Heart right ventricle (tissue), 16 donors: ENCODE measurements at regions of chr10 and their contacts with region 1.

Region 1: GRCh38 chr10:71486484-71487114 is 89.9 kb downstream of the CDH23 start:
- DNase-seq: peak in 1 of 2 donors; percentile 54
- ATAC-seq: peak in 7 of 8 donors; percentile 42 to 68 (median 55)
- H3K4me3 ChIP-seq: no peak overlapping the region
- H3K27ac ChIP-seq: no peak overlapping the region
- H3K4me1 ChIP-seq: peaks cover 0 to 9% (median 7%) of the 10 kb centered on the region in 9 donors
- H3K27me3 ChIP-seq: no peaks in the 10 kb centered on the region
- CTCF ChIP-seq: peak; percentile 21 to 67 (median 55)

Region 2: DNA sequence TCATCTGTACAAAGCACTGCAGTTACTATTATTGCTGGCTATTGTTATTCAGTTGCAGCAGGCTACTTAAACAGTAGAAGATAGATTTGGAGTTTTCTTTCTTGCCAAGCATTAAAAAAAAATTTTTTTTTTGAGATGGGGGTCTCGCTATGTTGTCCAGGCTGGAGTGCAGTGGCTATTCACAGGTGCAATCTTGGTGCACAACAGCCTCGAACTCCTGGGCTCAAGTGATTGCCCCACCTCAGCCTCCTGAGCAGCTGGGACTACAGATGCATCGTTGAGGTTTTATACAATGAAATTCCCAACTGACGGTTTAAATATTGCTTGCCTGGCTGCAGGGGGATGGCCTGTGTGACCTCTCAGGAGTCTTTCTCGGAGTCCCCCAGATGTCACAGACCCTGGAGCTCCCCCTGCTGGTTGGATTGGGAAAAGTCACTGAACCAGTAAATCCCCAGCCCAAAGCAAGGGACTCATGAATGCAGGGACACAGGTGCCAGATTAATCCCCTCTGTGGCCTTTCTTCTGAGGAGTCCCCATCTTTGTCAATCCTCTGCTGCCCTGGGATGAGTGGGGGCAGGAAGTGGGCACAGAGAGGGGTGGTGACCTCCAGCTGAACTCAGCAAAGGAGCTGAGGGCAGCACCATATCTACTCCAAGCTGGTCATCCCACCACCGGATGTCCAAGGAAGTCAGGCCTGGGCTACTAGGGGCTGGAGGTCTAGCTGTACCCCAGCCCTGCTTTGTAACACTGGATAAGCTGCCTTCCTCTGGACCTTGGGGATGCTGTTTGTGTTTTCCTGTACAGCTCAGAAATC is 83.4 kb after region 1 on chr10:
- intact Hi-C with region 1: loop called in 5 of 10 experiments (anchors 1 to 5 kb)
- DNase-seq: peak; percentile 58 to 77
- ATAC-seq: peak in 7 of 8 donors; percentile 44 to 73 (median 68)
- H3K4me3 ChIP-seq: no peak overlapping the region
- H3K27ac ChIP-seq: no peak overlapping the region
- H3K4me1 ChIP-seq: no peaks in the 10 kb centered on the region
- H3K27me3 ChIP-seq: no peaks in the 10 kb centered on the region
- CTCF ChIP-seq: peak; percentile 74 to 89 (median 87)

Region 3: GRCh38 chr10:71608819-71609768 is 122.5 kb after region 1 on chr10:
- intact Hi-C with region 1: loop called in 1 of 10 experiments (anchors 10 kb)
- DNase-seq: peak; percentile 82
- ATAC-seq: peak in 6 of 8 donors; percentile 19 to 61 (median 51)
- H3K4me3 ChIP-seq: no peak overlapping the region
- H3K27ac ChIP-seq: no peak overlapping the region
- H3K4me1 ChIP-seq: peaks cover 8 to 26% (median 16%) of the 10 kb centered on the region in 9 donors
- H3K27me3 ChIP-seq: no peaks in the 10 kb centered on the region
- CTCF ChIP-seq: peak; percentile 69 to 83 (median 82)

Region 4: GRCh38 chr10:71696628-71697326 is 210.2 kb after region 1 on chr10:
- intact Hi-C with region 1: loop called in 1 of 10 experiments (anchors 10 kb)
- DNase-seq: peak; percentile 61 to 78
- ATAC-seq: peak; percentile 47 to 73 (median 70)
- H3K4me3 ChIP-seq: no peak overlapping the region
- H3K27ac ChIP-seq: peak overlapping the region in 2 of 10 donors; percentile 16 to 87
- H3K4me1 ChIP-seq: peaks cover 0 to 67% (median 57%) of the 10 kb centered on the region in 9 donors
- H3K27me3 ChIP-seq: no peaks in the 10 kb centered on the region
- CTCF ChIP-seq: peak; percentile 75 to 90 (median 84)